ENCODE measurements at regions of chr7 and their contacts with region 1.

Region 1: DNA sequence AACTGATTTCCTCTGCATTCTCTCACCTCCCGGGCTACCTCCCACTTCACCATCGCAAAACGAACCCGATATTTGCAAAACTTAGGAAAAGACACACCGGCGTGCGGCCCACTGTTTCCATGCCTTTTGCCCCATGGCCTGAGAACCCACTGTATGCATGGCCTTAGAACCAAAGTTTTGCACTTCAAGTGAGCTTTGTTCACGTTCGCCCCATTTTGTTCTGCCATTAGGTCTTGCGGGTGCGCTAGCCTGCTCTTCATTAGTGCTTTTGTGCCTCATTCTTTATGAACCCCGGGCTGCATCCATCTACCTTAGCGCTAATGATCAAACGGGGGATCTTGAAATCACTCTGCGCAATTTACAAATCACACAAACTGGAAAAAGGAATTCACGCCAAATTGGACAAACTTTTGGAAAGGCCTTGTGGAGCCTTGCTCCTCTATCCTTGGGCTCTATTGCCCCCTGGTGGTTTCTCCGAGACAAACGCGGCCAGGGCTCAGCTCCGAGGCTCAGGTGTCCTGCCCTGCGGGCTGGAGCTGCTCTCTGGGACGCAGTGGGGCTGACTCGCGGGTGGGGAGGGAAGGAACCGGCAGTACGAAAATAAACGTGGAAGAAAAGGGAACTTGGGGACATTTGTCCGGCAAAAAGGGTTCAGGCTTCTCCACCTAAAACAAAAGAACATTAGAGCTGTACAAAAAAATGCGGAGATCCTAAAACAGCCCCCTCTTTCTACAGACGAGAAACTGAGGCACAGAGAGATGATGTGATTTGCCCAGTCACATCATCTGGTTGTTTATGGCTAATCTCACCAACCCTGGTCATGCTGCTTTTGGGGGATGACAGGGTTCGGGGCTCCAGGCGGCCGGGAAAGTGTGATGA is 300.4 kb upstream of the NFE2L3 start:
- DNase-seq: peak; percentile 71
- H3K4me3 Mint-ChIP-seq: peak overlapping the region; percentile 58
- H3K27ac Mint-ChIP-seq: peak overlapping the region; percentile 31
- H3K4me1 Mint-ChIP-seq: peaks cover 28% of the 10 kb centered on the region
- H3K27me3 Mint-ChIP-seq: peaks cover 58% of the 10 kb centered on the region

Region 2: GRCh38 chr7:25805027-25805687 is 46.4 kb before region 1 on chr7:
- CTCF ChIA-PET with region 1: no interaction called
- POLR2A ChIA-PET with region 1: no interaction called
- DNase-seq: no peak
- H3K4me3 Mint-ChIP-seq: no peak overlapping the region
- H3K27ac Mint-ChIP-seq: no peak overlapping the region
- H3K4me1 Mint-ChIP-seq: no peaks in the 10 kb centered on the region
- H3K27me3 Mint-ChIP-seq: peaks cover 7% of the 10 kb centered on the region

Region 3: DNA sequence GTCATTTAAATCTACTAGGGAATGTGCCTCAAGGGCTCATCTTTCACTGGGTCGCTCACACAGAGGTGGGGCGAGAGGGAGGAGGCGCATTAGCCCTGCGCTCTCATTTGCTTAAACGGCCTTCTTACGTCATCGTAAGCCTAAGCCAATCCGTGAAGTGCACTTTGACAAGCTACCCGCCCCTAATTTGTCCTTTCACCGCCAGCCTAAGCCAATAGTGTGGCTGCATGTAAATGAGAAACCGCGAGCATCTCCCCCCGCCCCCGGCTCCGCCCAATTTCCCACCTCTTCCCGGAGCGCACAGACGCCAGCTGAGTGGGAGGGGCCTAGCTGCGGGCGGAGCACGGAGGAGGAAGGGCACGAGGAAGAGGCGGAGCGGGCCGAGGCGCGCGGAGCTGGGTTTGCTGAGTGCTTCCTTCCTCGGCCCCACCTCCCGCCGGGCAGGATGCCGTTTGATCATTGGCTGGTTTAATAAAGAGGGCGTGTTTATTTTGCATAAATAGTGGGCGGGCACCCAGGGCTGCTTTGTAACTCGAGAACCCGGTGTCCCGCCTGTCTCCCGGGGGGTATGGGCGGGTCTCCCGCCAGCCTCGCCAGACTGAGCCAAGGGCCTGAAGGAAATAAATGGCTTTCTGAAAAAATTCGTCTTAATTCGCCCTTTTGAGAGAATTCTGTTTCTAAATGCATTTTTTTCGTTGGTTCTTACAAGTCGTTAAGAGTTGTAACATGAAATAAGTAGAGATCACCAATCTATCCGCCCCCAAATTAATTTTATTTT is 10.9 kb after region 1 on chr7:
- CTCF ChIA-PET with region 1: interaction called, 11 read pairs
- POLR2A ChIA-PET with region 1: no interaction called
- DNase-seq: peak; percentile 98
- H3K4me3 Mint-ChIP-seq: peak overlapping the region; percentile 76
- H3K27ac Mint-ChIP-seq: peak overlapping the region; percentile 83
- H3K4me1 Mint-ChIP-seq: peaks cover 44% of the 10 kb centered on the region
- H3K27me3 Mint-ChIP-seq: peaks cover 48% of the 10 kb centered on the region